Activated naive CD4-positive, alpha-beta T cell treated with anti-CD3 and anti-CD28 coated beads, Interleukin-2, amount 10 ng/mL, durations not matched to agents 7 days and 5 days (primary cell): ENCODE measurements at regions of chr3 and their contacts with region 1.

Region 1: GRCh38 chr3:17233398-17233800 is 348.6 kb downstream of the PLCL2 start:
- DNase-seq: peak; percentile 45
- H3K4me3 Mint-ChIP-seq: no peak overlapping the region
- H3K27ac Mint-ChIP-seq: no peak overlapping the region
- H3K4me1 Mint-ChIP-seq: peaks cover 34% of the 10 kb centered on the region
- H3K27me3 Mint-ChIP-seq: no peaks in the 10 kb centered on the region

Region 2: GRCh38 chr3:16600780-16601539 is 632.4 kb before region 1 on chr3:
- CTCF ChIA-PET with region 1: interaction called, 41 read pairs
- DNase-seq: peak; percentile 86
- H3K4me3 Mint-ChIP-seq: no peak overlapping the region
- H3K27ac Mint-ChIP-seq: no peak overlapping the region
- H3K4me1 Mint-ChIP-seq: peaks cover 26% of the 10 kb centered on the region
- H3K27me3 Mint-ChIP-seq: peaks cover 12% of the 10 kb centered on the region

Region 3: DNA sequence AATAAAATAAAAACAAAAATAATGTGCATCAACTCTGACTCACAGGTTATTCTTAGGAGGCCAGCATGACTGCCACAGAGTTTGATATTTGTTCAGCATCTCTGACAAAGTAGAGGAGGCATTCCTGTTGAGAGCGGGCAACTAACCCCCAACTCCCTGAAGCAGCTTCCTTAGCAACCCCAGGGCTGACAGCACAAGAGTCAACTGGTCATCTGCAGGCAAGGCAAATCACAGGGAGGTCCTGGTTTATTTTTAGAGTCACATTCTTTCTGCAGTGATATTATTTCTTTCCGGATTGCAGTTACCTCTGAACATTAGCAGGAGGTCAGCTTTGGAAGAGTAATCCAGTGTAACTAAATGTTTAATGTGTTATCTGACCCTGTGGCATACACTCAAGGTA is 75.7 kb before region 1 on chr3:
- CTCF ChIA-PET with region 1: no interaction called
- DNase-seq: no peak
- H3K4me3 Mint-ChIP-seq: no peak overlapping the region
- H3K27ac Mint-ChIP-seq: no peak overlapping the region
- H3K4me1 Mint-ChIP-seq: peaks cover 25% of the 10 kb centered on the region
- H3K27me3 Mint-ChIP-seq: no peaks in the 10 kb centered on the region

Region 4: DNA sequence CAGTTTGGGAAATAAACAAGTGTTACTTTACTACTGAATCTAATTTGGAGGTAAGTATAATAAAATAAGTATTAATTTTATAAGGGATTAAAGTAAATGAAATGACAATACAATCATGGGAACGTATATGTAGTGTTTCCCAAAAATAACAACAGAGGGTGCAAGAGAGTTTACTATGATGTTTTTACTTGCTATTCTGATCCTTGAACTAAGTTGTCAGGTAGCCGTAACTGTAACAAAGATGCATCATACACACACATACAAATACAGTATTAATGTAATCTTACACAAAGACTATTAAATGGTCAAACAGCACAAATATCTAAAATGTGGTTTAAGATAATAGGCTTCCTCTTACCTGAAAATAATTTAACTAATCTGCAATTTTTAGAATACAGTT is 197.6 kb after region 1 on chr3:
- CTCF ChIA-PET with region 1: no interaction called
- DNase-seq: no peak
- H3K4me3 Mint-ChIP-seq: no peak overlapping the region
- H3K27ac Mint-ChIP-seq: no peak overlapping the region
- H3K4me1 Mint-ChIP-seq: no peaks in the 10 kb centered on the region
- H3K27me3 Mint-ChIP-seq: no peaks in the 10 kb centered on the region

Region 5: DNA sequence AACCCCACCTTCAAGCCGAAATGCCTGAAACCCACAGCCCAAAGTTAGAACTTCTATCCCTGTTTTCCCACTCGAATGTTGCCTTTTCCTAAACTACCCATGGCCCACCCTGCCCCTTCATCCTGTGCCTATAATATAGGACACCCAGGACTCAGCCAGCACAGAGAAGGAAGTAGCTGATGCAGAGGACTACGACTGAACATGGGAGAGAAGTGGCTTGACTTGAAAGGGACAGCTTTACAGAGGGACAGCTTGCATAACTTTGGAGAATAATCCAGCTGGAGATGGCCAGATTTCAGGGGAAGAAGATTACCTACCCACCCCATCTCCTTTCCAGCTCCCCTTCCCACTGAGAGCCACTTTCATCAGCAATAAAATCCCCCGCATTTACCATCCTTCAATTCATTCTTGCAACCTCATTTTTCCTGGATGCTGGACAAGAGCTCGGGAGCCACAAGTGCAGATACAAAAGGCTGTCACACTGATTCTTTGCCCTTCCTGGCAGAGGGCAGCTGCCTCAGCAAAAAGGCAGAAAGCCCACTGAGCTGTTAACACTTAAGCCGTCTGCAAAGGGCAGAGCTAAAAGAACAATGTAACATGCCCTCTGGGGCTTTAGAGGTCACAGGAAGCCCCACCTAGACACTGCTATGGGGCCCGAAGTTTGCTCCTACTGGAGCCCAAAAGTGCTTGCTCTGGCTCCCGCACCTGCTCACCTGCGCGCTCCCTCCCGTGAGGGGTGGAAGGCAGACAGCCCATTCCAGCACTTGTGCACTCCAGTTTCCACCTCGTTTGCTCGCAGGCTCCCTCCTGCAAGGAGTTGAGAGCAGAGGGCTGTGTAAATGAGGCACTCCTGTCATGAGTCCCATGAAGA is 285.0 kb after region 1 on chr3:
- CTCF ChIA-PET with region 1: no interaction called
- DNase-seq: no peak
- H3K4me3 Mint-ChIP-seq: no peak overlapping the region
- H3K27ac Mint-ChIP-seq: no peak overlapping the region
- H3K4me1 Mint-ChIP-seq: no peaks in the 10 kb centered on the region
- H3K27me3 Mint-ChIP-seq: no peaks in the 10 kb centered on the region